ENCODE measurements at regions of chr6 and their contacts with region 1.

Region 1: GRCh38 chr6:27809939-27810767 is 102.0 kb downstream of the OR2B2 start:
- DNase-seq: peak; percentile 96
- H3K4me3 Mint-ChIP-seq: peak overlapping the region; percentile 86
- H3K27ac Mint-ChIP-seq: peak overlapping the region; percentile 94
- H3K4me1 Mint-ChIP-seq: peaks cover 20% of the 10 kb centered on the region
- H3K27me3 Mint-ChIP-seq: no peaks in the 10 kb centered on the region
- CTCF ChIP-seq: no peak

Region 2: DNA sequence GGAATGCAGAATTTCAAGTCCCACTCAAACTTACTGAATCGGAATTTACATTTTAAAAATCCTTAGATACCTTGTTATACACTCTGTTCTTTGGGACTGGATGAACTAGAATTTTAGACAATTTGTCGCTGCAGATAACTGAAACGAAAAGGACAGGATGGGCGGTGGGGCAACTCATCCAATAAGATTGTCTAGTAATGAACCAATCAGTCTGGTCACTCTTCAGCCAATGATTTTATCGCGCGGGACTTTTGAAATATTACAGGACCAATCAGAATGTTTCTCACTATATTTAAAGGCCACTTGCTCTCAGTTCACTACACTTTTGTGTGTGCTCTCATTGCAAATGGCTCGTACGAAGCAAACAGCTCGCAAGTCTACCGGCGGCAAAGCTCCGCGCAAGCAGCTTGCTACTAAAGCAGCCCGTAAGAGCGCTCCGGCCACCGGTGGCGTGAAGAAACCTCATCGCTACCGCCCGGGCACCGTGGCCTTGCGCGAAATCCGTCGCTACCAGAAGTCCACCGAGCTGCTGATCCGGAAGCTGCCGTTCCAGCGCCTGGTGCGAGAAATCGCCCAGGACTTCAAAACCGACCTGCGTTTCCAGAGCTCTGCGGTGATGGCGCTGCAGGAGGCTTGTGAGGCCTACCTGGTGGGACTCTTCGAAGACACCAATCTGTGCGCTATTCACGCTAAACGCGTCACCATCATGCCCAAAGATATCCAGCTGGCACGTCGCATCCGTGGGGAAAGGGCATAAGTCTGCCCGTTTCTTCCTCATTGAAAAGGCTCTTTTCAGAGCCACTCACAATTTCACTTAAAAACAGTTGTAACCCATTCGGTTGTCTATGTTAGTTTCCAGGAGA is 1764.9 kb before region 1 on chr6:
- CTCF ChIA-PET with region 1: no interaction called
- POLR2A ChIA-PET with region 1: interaction called, 17 read pairs
- intact Hi-C with region 1: no loop called
- DNase-seq: peak; percentile 95
- H3K4me3 Mint-ChIP-seq: peak overlapping the region; percentile 80
- H3K27ac Mint-ChIP-seq: peak overlapping the region; percentile 86
- H3K4me1 Mint-ChIP-seq: peaks cover 16% of the 10 kb centered on the region
- H3K27me3 Mint-ChIP-seq: no peaks in the 10 kb centered on the region
- CTCF ChIP-seq: no peak

Region 3: GRCh38 chr6:26183581-26184366 is 1626.4 kb before region 1 on chr6:
- CTCF ChIA-PET with region 1: no interaction called
- POLR2A ChIA-PET with region 1: interaction called, 16 read pairs
- intact Hi-C with region 1: no loop called
- DNase-seq: peak; percentile 56
- H3K4me3 Mint-ChIP-seq: peak overlapping the region; percentile 79
- H3K27ac Mint-ChIP-seq: peak overlapping the region; percentile 84
- H3K4me1 Mint-ChIP-seq: peaks cover 27% of the 10 kb centered on the region
- H3K27me3 Mint-ChIP-seq: no peaks in the 10 kb centered on the region
- CTCF ChIP-seq: no peak

Region 4: DNA sequence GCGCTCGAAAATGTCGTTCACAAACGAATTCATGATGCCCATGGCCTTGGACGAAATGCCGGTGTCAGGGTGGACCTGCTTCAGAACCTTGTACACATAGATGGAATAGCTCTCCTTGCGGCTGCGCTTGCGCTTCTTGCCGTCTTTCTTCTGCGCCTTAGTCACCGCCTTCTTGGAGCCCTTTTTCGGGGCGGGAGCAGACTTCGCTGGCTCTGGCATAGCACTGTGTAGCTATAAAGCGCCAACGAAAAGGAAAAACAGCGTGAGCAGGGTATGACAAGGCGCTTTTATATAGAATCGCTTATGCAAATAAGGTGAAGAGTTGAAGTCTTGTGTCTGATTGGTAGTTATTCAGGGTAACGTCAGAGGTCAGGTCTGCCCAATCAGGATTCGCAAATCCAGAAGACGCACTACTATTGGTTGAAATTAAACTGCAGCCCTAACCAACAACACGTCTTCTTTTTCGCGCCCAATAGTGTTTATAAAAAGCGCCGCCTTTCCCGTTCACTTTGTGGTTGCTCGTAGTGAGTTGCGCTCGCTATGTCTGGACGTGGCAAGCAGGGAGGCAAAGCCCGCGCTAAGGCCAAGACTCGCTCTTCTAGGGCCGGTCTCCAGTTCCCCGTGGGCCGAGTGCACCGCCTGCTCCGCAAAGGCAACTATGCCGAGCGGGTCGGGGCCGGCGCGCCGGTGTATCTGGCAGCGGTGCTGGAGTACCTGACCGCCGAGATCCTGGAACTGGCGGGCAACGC is 677.4 kb before region 1 on chr6:
- CTCF ChIA-PET with region 1: no interaction called
- POLR2A ChIA-PET with region 1: interaction called, 158 read pairs
- intact Hi-C with region 1: no loop called
- DNase-seq: peak; percentile 99
- H3K4me3 Mint-ChIP-seq: no peak overlapping the region
- H3K27ac Mint-ChIP-seq: no peak overlapping the region
- H3K4me1 Mint-ChIP-seq: peaks cover 11% of the 10 kb centered on the region
- H3K27me3 Mint-ChIP-seq: no peaks in the 10 kb centered on the region
- CTCF ChIP-seq: no peak

Region 5: GRCh38 chr6:27518881-27519795 is 291.0 kb before region 1 on chr6:
- CTCF ChIA-PET with region 1: no interaction called
- POLR2A ChIA-PET with region 1: no interaction called
- intact Hi-C with region 1: no loop called
- DNase-seq: peak; percentile 88
- H3K4me3 Mint-ChIP-seq: peak overlapping the region; percentile 92
- H3K27ac Mint-ChIP-seq: peak overlapping the region; percentile 85
- H3K4me1 Mint-ChIP-seq: no peaks in the 10 kb centered on the region
- H3K27me3 Mint-ChIP-seq: no peaks in the 10 kb centered on the region
- CTCF ChIP-seq: peak; percentile 73

Region 6: GRCh38 chr6:27825025-27825793 is 15.1 kb after region 1 on chr6:
- CTCF ChIA-PET with region 1: interaction called, 6 read pairs
- POLR2A ChIA-PET with region 1: interaction called, 690 read pairs
- intact Hi-C with region 1: no loop called
- DNase-seq: no peak
- H3K4me3 Mint-ChIP-seq: peak overlapping the region; percentile 94
- H3K27ac Mint-ChIP-seq: peak overlapping the region; percentile 95
- H3K4me1 Mint-ChIP-seq: peaks cover 10% of the 10 kb centered on the region
- H3K27me3 Mint-ChIP-seq: no peaks in the 10 kb centered on the region
- CTCF ChIP-seq: no peak

Region 7: GRCh38 chr6:28080631-28081485 is 270.7 kb after region 1 on chr6:
- CTCF ChIA-PET with region 1: no interaction called
- POLR2A ChIA-PET with region 1: interaction called, 3 read pairs
- intact Hi-C with region 1: loop called (anchors 10 kb)
- DNase-seq: peak; percentile 97
- H3K4me3 Mint-ChIP-seq: peak overlapping the region; percentile 80
- H3K27ac Mint-ChIP-seq: peak overlapping the region; percentile 99
- H3K4me1 Mint-ChIP-seq: peaks cover 13% of the 10 kb centered on the region
- H3K27me3 Mint-ChIP-seq: no peaks in the 10 kb centered on the region
- CTCF ChIP-seq: no peak